T-cell (primary cell): ENCODE measurements at regions of chr19 and their contacts with region 1.

Region 1: GRCh38 chr19:10644260-10645007 is 9.7 kb upstream of the ILF3 start:
- DNase-seq: peak; percentile 61 to 91 (median 82)
- ATAC-seq: peak; percentile 84 to 93 (median 90)
- H3K4me3 ChIP-seq: no peak overlapping the region
- H3K4me3 Mint-ChIP-seq: peak overlapping the region in 1 of 3 donors; percentile 8
- H3K27ac ChIP-seq: peak overlapping the region; percentile 48
- H3K27ac Mint-ChIP-seq: peak overlapping the region; percentile 73 to 91
- H3K4me1 ChIP-seq: peaks cover 4 to 39% of the 10 kb centered on the region in 2 experiments
- H3K4me1 Mint-ChIP-seq: peaks cover 10 to 33% (median 14%) of the 10 kb centered on the region in 3 donors
- H3K27me3 ChIP-seq: no peaks in the 10 kb centered on the region
- H3K27me3 Mint-ChIP-seq: no peaks in the 10 kb centered on the region

Region 2: GRCh38 chr19:10315335-10316214 is 328.9 kb before region 1 on chr19 and contains the start of gene FDX2:
- CTCF ChIA-PET with region 1: no interaction called
- POLR2A ChIA-PET with region 1: no interaction called
- DNase-seq: peak; percentile 78 to 94 (median 88)
- ATAC-seq: peak; percentile 89 to 93 (median 90)
- H3K4me3 ChIP-seq: peak within 1 kb of the TSS; percentile 78 to 81
- H3K4me3 Mint-ChIP-seq: peak within 1 kb of the TSS; percentile 84 to 91 (median 88)
- H3K27ac ChIP-seq: peak within 1 kb of the TSS; percentile 53
- H3K27ac Mint-ChIP-seq: peak within 1 kb of the TSS; percentile 78 to 83
- H3K4me1 ChIP-seq: peaks cover 5 to 16% of the 10 kb centered on the region in 2 experiments
- H3K4me1 Mint-ChIP-seq: peaks cover 14 to 22% (median 17%) of the 10 kb centered on the region in 3 donors
- H3K27me3 ChIP-seq: no peaks in the 10 kb centered on the region
- H3K27me3 Mint-ChIP-seq: no peaks in the 10 kb centered on the region
- total RNA-seq, gene FDX2: 5.7 to 16.8 (median 11.4) TPM

Region 3: GRCh38 chr19:10580979-10581631 is 63.3 kb before region 1 on chr19:
- CTCF ChIA-PET with region 1: interaction called, 31 to 83 read pairs
- POLR2A ChIA-PET with region 1: interaction called, 3 to 9 read pairs
- DNase-seq: peak; percentile 73 to 94 (median 88)
- ATAC-seq: peak; percentile 91 to 98 (median 95)
- H3K4me3 ChIP-seq: peak overlapping the region in 1 of 2 donors; percentile 3
- H3K4me3 Mint-ChIP-seq: no peak overlapping the region
- H3K27ac ChIP-seq: no peak overlapping the region
- H3K27ac Mint-ChIP-seq: peak overlapping the region in 1 of 2 donors; percentile 34
- H3K4me1 ChIP-seq: peaks cover 0 to 19% of the 10 kb centered on the region in 2 experiments
- H3K4me1 Mint-ChIP-seq: peaks cover 11 to 14% (median 14%) of the 10 kb centered on the region in 3 donors
- H3K27me3 ChIP-seq: peaks cover 0 to 9% of the 10 kb centered on the region in 2 experiments
- H3K27me3 Mint-ChIP-seq: peaks cover 0 to 1% of the 10 kb centered on the region in 2 donors

Region 4: DNA sequence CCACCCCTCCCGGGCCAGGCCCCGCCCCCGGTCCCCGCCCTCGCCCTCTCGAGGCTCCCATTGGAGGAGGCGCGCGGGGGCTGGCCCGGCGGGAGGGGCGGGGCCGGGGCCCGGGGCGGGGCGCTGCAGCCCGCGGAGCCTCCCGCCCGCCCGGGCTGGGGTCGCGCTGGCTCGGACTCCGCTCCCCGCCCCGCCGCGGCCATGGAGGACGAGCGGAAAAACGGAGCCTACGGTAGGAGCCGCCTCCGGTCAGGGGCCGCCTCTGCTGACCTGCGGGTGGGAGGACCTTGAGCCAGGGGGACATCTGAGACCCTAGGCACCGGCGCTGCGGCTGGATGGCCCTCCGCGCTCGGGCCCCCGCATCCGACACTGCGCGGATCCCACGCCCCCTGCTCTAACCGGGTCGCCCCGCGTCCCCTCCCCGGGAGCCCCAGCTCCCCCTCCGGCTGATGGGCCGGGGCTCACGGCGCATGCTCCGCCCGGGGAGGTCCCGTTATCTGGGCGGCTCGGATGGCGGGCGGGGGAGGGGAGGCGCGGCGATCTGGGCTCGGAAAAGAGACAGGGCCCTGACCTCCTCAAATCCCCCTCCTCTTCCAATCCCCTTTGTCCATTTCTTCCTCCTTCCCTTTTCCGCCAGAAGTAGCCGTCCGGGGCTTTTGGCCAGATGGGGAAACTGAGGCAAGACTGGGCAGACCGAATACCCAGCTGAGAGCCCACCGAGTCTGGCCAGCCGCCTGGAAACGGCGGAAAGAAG is 41.9 kb before region 1 on chr19:
- CTCF ChIA-PET with region 1: interaction called in 1 of 2 experiments, 10 read pairs
- POLR2A ChIA-PET with region 1: interaction called, 3 to 6 read pairs
- DNase-seq: peak; percentile 69 to 91 (median 84)
- ATAC-seq: peak; percentile 79 to 90 (median 82)
- H3K4me3 ChIP-seq: peak overlapping the region; percentile 95 to 98
- H3K4me3 Mint-ChIP-seq: peak overlapping the region; percentile 97 to 99 (median 99)
- H3K27ac ChIP-seq: peak overlapping the region; percentile 98
- H3K27ac Mint-ChIP-seq: peak overlapping the region; percentile 99
- H3K4me1 ChIP-seq: peaks cover 7 to 46% of the 10 kb centered on the region in 2 experiments
- H3K4me1 Mint-ChIP-seq: peaks cover 27 to 37% (median 31%) of the 10 kb centered on the region in 3 donors
- H3K27me3 ChIP-seq: no peaks in the 10 kb centered on the region
- H3K27me3 Mint-ChIP-seq: no peaks in the 10 kb centered on the region

Region 5: DNA sequence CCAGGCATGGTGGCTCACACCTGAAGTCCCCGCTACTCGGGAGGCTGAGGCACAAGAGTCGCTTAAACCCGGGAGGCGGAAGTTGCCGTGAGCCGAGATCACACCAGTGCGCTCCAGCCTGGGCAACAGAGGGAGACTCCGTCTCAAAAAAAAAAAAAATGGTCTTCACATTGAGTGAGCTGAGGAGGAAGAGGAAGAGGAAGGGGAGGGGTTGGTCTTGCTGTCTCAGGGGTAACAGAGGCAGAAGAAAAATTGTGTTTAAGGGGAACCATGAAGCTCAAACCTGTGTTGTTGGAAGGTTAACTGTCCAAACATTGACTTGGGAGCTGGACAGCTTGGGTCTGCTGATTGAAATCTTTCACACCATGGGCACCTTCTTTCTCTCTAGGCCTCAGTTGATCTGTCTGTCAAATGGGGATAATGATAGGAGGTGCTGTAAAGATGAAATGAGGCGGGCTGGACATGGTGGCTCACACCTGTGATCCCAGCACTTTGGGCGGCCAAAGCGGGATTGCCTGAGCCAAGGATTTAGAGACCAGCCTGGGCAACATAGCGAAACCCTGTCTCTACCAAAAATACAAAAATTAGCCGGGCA is 28.9 kb before region 1 on chr19:
- CTCF ChIA-PET with region 1: interaction called in 1 of 2 experiments, 5 read pairs
- POLR2A ChIA-PET with region 1: interaction called in 1 of 2 experiments, 13 read pairs
- DNase-seq: no peak
- ATAC-seq: no peak
- H3K4me3 ChIP-seq: no peak overlapping the region
- H3K4me3 Mint-ChIP-seq: peak overlapping the region in 1 of 3 donors; percentile 64
- H3K27ac ChIP-seq: peak overlapping the region; percentile 5
- H3K27ac Mint-ChIP-seq: peak overlapping the region; percentile 63 to 71
- H3K4me1 ChIP-seq: peaks cover 3 to 71% of the 10 kb centered on the region in 2 experiments
- H3K4me1 Mint-ChIP-seq: peaks cover 49 to 57% (median 51%) of the 10 kb centered on the region in 3 donors
- H3K27me3 ChIP-seq: no peaks in the 10 kb centered on the region
- H3K27me3 Mint-ChIP-seq: no peaks in the 10 kb centered on the region

Region 6: GRCh38 chr19:10695401-10696398 is 51.3 kb after region 1 on chr19:
- CTCF ChIA-PET with region 1: interaction called, 3 to 10 read pairs
- POLR2A ChIA-PET with region 1: no interaction called
- DNase-seq: peak; percentile 67 to 93 (median 84)
- ATAC-seq: peak; percentile 90 to 97 (median 96)
- H3K4me3 ChIP-seq: peak overlapping the region; percentile 32 to 52
- H3K4me3 Mint-ChIP-seq: peak overlapping the region; percentile 72 to 84 (median 75)
- H3K27ac ChIP-seq: no peak overlapping the region
- H3K27ac Mint-ChIP-seq: peak overlapping the region; percentile 5 to 56
- H3K4me1 ChIP-seq: peaks cover 2 to 18% of the 10 kb centered on the region in 2 experiments
- H3K4me1 Mint-ChIP-seq: peaks cover 15 to 21% (median 20%) of the 10 kb centered on the region in 3 donors
- H3K27me3 ChIP-seq: peaks cover 0 to 24% of the 10 kb centered on the region in 2 experiments
- H3K27me3 Mint-ChIP-seq: peaks cover 0 to 5% of the 10 kb centered on the region in 2 donors